ENCODE measurements at regions of chr13 and their contacts with region 1.

Region 1: DNA sequence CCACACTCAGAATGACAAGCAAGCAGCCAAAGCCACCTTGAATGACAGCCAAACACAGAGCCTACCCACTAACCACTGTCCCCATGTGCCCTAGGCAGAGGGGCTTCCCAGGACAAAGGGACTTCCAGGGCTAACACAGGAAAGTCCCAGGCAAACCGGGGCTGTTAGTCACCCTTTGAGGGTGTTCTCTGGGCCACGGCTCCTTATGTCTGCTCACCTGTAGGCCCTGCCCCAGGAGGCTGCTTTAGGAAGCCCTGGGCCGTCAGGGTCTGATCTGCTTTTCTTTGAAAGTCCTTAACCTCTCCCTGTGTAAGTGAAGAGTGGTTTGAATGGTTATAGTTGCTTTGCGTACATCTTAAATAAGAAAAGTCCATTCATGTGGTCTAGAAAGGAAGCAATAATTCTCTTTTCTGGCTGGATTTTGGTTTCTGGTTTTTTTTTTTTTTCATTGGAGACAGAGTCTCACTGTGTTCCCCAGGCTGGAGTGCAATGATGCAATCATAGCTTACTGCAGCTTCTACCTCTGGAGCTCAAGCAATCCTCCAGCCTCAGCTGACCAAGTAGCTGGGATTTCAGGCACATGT is 161.4 kb downstream of the EFNB2 start:
- DNase-seq: peak; percentile 69
- ATAC-seq: peak; percentile 88
- H3K4me3 ChIP-seq: no peak overlapping the region
- H3K27ac ChIP-seq: peak overlapping the region; percentile 48
- H3K4me1 ChIP-seq: peaks cover 9% of the 10 kb centered on the region; the same call in 1 of the 2 replicates
- H3K27me3 ChIP-seq: no peaks in the 10 kb centered on the region
- CTCF ChIP-seq: no peak
- EP300 ChIP-seq: peak; percentile 57 to 68; a peak in 2 of 4 replicates
- POLR2A ChIP-seq: no peak
- RAD21 ChIP-seq: no peak

Region 2: GRCh38 chr13:106100171-106100919 is 273.7 kb before region 1 on chr13:
- CTCF ChIA-PET with region 1: no interaction called
- POLR2A ChIA-PET with region 1: no interaction called
- RAD21 ChIA-PET with region 1: no interaction called
- SMC1A ChIA-PET with region 1: no interaction called
- in situ Hi-C with region 1: no loop called
- intact Hi-C with region 1: loop called (anchors 1 kb)
- DNase-seq: no peak
- ATAC-seq: peak; percentile 90
- H3K4me3 ChIP-seq: no peak overlapping the region
- H3K27ac ChIP-seq: no peak overlapping the region
- H3K4me1 ChIP-seq: no peaks in the 10 kb centered on the region
- H3K27me3 ChIP-seq: no peaks in the 10 kb centered on the region
- CTCF ChIP-seq: no peak
- EP300 ChIP-seq: peak in 1 of 2 experiments; percentile 34; a peak in 1 of 4 replicates
- POLR2A ChIP-seq: no peak
- RAD21 ChIP-seq: no peak

Region 3: GRCh38 chr13:106349080-106349931 is 24.8 kb before region 1 on chr13:
- CTCF ChIA-PET with region 1: interaction called, 4 read pairs
- POLR2A ChIA-PET with region 1: interaction called, 4 read pairs
- RAD21 ChIA-PET with region 1: interaction called, 3 read pairs
- SMC1A ChIA-PET with region 1: interaction called, 22 read pairs
- in situ Hi-C with region 1: no loop called
- intact Hi-C with region 1: no loop called
- DNase-seq: no peak
- ATAC-seq: peak; percentile 57
- H3K4me3 ChIP-seq: no peak overlapping the region
- H3K27ac ChIP-seq: no peak overlapping the region
- H3K4me1 ChIP-seq: no peaks in the 10 kb centered on the region; the same call in 1 of the 2 replicates
- H3K27me3 ChIP-seq: no peaks in the 10 kb centered on the region; a peak in 1 of 4 replicates
- CTCF ChIP-seq: no peak
- EP300 ChIP-seq: no peak
- POLR2A ChIP-seq: no peak
- RAD21 ChIP-seq: no peak

Measured in GM12878 (cell line).